PC-3 (cell line): ENCODE measurements at regions of chr18 and their contacts with region 1.

Region 1: DNA sequence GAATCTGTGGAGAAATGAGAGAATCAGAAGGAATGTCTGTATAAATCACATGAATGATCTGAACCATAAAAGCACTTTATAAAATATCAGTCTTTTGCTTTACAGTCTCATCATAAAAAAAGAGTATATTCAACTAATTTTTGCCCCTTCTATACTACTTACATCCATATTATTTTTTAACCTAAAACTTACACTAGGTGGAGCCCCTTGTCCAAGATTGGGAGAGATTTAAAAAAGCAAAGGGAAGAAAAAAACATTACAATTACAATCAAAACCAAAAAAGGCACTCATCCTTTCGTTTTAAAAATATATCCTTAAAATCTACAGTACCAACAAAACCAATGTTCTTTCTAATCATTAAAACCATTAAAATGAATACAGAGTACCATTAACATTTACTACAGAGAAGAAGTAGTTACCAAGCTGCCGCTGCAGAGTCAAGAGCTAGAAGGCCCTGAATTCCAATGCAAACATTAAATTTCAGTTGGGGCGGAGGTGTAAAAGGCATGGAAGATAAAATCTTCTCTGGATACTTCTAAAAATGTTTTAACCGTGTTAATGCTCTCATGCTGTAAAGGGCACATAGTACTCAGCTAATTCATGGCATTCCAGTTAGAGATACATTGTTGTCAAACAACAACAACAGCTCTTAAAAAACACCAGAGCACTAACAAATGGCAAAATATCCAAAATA is 56.7 kb upstream of the EPB41L3 start:
- DNase-seq: peak; percentile 39
- ATAC-seq: peak; percentile 53; the same call in 1 of the 2 replicates
- H3K4me3 ChIP-seq: no peak overlapping the region
- H3K27ac ChIP-seq: no peak overlapping the region
- H3K4me1 ChIP-seq: no peaks in the 10 kb centered on the region
- H3K27me3 ChIP-seq: no peaks in the 10 kb centered on the region
- CTCF ChIP-seq: peak; percentile 67

Region 2: DNA sequence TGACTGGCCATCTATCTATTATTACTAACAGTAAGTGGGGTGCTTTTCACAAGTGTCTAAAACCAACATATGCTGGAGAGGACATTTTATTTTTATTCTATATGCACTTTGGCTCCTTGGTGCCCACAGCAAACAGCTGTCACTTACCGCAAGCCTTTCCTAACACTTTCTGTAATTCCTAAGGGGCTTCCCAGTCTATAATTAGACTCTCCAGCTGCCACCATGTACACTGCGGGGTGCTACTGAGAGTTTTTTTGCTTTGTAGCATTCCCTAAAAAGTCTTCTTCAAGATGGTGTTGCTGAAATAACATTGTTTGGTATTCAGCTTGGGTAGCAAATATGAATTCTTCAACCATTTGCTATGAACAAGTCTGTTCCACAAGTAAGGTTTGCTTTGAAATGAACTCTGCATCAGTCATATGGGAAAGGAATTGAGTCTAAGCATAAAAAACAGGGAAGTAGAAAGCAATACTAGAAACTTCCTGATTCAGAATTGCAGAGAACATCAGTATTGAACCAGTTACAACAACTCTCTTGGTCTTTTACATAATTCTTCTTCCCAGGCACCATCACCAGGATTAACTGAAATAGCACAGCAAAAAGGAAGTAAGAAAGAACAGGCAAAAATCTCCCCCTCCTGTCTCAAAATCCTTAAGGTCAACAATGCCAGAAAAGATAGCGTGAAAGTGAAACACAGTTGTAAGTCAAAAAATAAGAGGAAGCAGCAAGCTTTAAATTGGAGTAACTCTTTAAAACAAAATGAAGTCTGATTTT is 85.3 kb before region 1 on chr18:
- CTCF ChIA-PET with region 1: no interaction called
- POLR2A ChIA-PET with region 1: interaction called, 21 read pairs
- intact Hi-C with region 1: no loop called
- DNase-seq: no peak
- ATAC-seq: no peak
- H3K4me3 ChIP-seq: no peak overlapping the region
- H3K27ac ChIP-seq: no peak overlapping the region
- H3K4me1 ChIP-seq: no peaks in the 10 kb centered on the region
- H3K27me3 ChIP-seq: no peaks in the 10 kb centered on the region
- CTCF ChIP-seq: no peak